HEK293 (cell line): ENCODE measurements at regions of chr10 and their contacts with region 1.

Region 1: DNA sequence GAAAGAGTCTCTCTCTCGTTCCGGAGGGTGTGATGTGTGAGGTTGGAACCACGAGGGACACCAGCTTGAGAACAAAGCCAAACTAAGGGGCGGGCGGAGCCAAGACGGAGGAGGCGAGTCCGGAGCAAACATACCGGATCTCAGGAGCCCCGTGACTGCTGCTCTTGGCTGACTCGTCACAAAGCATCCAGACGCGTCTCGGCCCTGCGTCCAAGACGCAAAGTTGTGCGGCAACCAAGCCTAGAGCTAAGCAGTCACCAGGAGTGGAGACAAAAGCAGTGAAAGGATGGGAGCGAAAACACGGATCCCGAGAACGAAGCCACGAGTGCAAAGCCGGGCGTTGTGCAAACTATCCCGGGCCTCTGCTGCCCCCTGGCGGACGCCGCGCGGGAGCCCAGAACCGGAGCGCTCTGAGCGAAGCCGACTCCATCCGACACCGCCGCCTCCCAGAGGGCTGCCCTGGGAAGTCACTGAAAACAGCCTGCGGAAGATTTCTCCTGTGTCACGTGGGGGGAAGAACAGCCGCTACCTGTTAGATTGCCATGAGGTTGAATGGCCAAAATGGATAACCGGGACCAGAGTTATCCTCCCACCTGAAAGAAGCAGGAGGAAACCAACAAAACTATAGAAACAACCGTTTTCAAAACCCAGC is 46.4 kb upstream of the TMEM72 start:
- H3K4me3 ChIP-seq: peak overlapping the region; percentile 28
- H3K27ac ChIP-seq: peak overlapping the region; percentile 54; the same call in 1 of the 2 replicates
- H3K4me1 ChIP-seq: peaks cover 3% of the 10 kb centered on the region; the same call in 1 of the 2 replicates
- CTCF ChIP-seq: peak; percentile 98

Region 2: GRCh38 chr10:44281089-44281613 is 583.6 kb before region 1 on chr10:
- CTCF ChIA-PET with region 1: no interaction called
- POLR2A ChIA-PET with region 1: no interaction called
- H3K4me3 ChIP-seq: no peak overlapping the region
- H3K27ac ChIP-seq: no peak overlapping the region
- H3K4me1 ChIP-seq: no peaks in the 10 kb centered on the region
- CTCF ChIP-seq: no peak

Region 3: GRCh38 chr10:44828508-44829142 is 36.1 kb before region 1 on chr10:
- CTCF ChIA-PET with region 1: no interaction called
- POLR2A ChIA-PET with region 1: no interaction called
- H3K4me3 ChIP-seq: no peak overlapping the region
- H3K27ac ChIP-seq: no peak overlapping the region
- H3K4me1 ChIP-seq: no peaks in the 10 kb centered on the region
- CTCF ChIP-seq: no peak

Region 4: GRCh38 chr10:44878706-44879530 is 14.2 kb after region 1 on chr10:
- CTCF ChIA-PET with region 1: interaction called, 17 read pairs
- POLR2A ChIA-PET with region 1: no interaction called
- H3K4me3 ChIP-seq: peak overlapping the region; percentile 21
- H3K27ac ChIP-seq: no peak overlapping the region
- H3K4me1 ChIP-seq: no peaks in the 10 kb centered on the region
- CTCF ChIP-seq: peak; percentile 47; the same call in 1 of the 2 replicates